Stomach (tissue), 19 donors: ENCODE measurements at regions of chr19 and their contacts with region 1.

Region 1: GRCh38 chr19:7852851-7853769 is 21.1 kb downstream of the PRR36 start:
- DNase-seq: peak; percentile 87 to 96
- H3K4me3 ChIP-seq: no peak overlapping the region
- H3K27ac ChIP-seq: no peak overlapping the region
- H3K4me1 ChIP-seq: peaks cover 0 to 18% (median 10%) of the 10 kb centered on the region in 4 donors
- H3K27me3 ChIP-seq: peaks cover 0 to 27% (median 0%) of the 10 kb centered on the region in 3 donors
- CTCF ChIP-seq: peak in 5 of 7 experiments; percentile 68 to 91 (median 77)
- EP300 ChIP-seq: no peak
- POLR2A ChIP-seq: no peak

Region 2: DNA sequence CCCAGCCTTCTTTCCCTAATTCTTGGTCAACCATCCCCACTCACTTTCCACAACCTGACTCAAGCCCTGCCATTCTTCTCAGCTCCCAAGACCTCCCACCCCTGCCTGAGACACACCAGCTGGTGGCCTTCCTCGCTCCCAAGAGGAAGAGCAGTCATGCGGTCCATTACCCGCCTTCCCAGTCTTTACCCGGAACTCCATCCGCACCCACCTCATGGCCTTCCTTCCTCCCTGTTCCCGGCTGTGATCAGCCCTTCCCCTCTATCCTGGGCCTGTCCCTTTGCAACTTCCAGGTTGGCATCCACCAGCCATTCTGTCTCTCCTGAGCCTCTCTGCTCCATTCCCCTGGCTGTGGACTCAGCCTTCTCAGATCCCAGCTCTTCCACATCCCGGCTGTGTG is 540.3 kb before region 1 on chr19:
- intact Hi-C with region 1: no loop called
- DNase-seq: no peak
- H3K4me3 ChIP-seq: no peak overlapping the region
- H3K27ac ChIP-seq: no peak overlapping the region
- H3K4me1 ChIP-seq: no peaks in the 10 kb centered on the region
- H3K27me3 ChIP-seq: no peaks in the 10 kb centered on the region
- CTCF ChIP-seq: no peak
- EP300 ChIP-seq: no peak
- POLR2A ChIP-seq: no peak

Region 3: DNA sequence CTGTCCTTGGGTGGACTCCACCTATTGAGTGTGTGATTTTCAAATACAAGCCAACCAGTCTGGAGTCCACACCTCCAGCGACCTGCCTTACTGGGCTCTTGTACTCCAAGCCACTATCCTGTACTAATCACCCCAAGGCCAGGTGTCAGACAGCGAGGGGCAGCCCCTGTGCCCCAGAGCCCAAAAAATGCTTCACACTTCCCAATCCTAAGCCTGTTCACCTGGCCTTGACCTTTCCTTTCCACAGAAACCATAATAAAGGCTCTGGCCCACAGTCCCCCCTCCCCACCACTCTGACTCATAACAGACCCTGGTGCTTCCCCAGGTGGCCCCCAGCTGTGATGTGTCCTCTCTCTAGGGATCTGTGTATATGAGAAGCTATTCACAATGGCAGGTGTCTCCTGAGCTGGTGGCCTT is 109.7 kb before region 1 on chr19:
- intact Hi-C with region 1: no loop called
- DNase-seq: no peak
- H3K4me3 ChIP-seq: no peak overlapping the region
- H3K27ac ChIP-seq: no peak overlapping the region
- H3K4me1 ChIP-seq: no peaks in the 10 kb centered on the region
- H3K27me3 ChIP-seq: peaks cover 0 to 49% (median 0%) of the 10 kb centered on the region in 3 donors
- CTCF ChIP-seq: no peak
- EP300 ChIP-seq: no peak
- POLR2A ChIP-seq: no peak

Region 4: GRCh38 chr19:7919610-7920518 is 66.8 kb after region 1 on chr19 and contains the start of gene SNAPC2:
- intact Hi-C with region 1: loop called (anchors 10 kb)
- DNase-seq: peak; percentile 98
- H3K4me3 ChIP-seq: peak within 1 kb of the TSS; percentile 69 to 83 (median 76)
- H3K27ac ChIP-seq: peak within 1 kb of the TSS; percentile 89 to 97 (median 94)
- H3K4me1 ChIP-seq: peaks cover 54 to 91% (median 70%) of the 10 kb centered on the region in 4 donors
- H3K27me3 ChIP-seq: peaks cover 12 to 52% (median 46%) of the 10 kb centered on the region in 3 donors
- CTCF ChIP-seq: no peak
- EP300 ChIP-seq: no peak
- POLR2A ChIP-seq: no peak
- total RNA-seq, gene SNAPC2: 2.3 to 18.3 (median 12.2) TPM

Region 5: DNA sequence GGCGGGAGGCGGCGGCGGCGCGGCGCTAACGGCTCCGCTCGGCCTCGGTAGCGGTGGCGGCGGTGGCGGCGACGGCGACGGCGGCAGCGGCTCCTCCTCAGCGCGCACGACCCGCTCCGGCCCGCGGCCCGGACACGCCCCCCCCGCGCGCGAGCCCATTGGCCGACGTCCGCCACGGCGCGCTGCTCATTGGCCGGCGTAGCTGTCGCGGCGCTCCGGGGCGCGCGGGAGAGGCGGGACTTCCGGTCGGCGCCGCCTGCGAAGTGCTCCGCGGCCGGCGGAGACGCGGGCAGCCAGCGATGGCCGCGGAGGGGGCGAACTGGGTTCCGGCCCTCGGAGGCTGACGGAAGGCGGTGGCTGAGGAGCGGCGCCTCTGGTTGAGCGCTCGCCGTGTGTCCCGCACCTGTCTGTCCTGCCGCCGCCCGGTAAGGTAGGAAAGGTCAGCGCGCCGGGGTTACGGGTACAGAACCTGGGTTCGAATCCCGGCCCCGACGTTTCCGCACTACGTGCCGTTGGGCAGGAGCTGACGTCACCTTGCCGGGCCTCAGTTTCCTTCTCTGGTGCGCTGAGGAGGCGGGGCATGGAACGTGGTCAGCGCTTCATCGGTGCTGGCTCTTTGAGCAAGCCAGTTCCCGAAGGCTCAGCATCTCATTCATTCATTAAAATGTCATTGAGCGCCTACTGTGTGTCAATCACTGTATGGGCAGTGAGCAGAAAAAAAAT is 152.6 kb after region 1 on chr19 and contains the start of gene ELAVL1:
- intact Hi-C with region 1: loop called (anchors 10 kb)
- DNase-seq: peak; percentile 93 to 98
- H3K4me3 ChIP-seq: peak within 1 kb of the TSS; percentile 81 to 94 (median 84)
- H3K27ac ChIP-seq: peak within 1 kb of the TSS; percentile 77 to 95 (median 90)
- H3K4me1 ChIP-seq: peaks cover 34 to 54% (median 52%) of the 10 kb centered on the region in 4 donors
- H3K27me3 ChIP-seq: no peaks in the 10 kb centered on the region
- CTCF ChIP-seq: no peak
- EP300 ChIP-seq: no peak
- POLR2A ChIP-seq: no peak
- total RNA-seq, gene ELAVL1: 11.2 to 50.2 (median 20.2) TPM